GM12878 (cell line): ENCODE measurements at regions of chr7 and their contacts with region 1.

Region 1: GRCh38 chr7:81956520-81956919 is 186.7 kb upstream of the HGF start:
- DNase-seq: peak; percentile 30
- ATAC-seq: peak; percentile 98
- H3K4me3 ChIP-seq: no peak overlapping the region
- H3K27ac ChIP-seq: no peak overlapping the region
- H3K4me1 ChIP-seq: no peaks in the 10 kb centered on the region
- H3K27me3 ChIP-seq: no peaks in the 10 kb centered on the region
- CTCF ChIP-seq: peak; percentile 52 to 72 (median 66); a peak in 5 of 6 replicates
- EP300 ChIP-seq: no peak
- POLR2A ChIP-seq: no peak
- RAD21 ChIP-seq: peak; percentile 99

Region 2: DNA sequence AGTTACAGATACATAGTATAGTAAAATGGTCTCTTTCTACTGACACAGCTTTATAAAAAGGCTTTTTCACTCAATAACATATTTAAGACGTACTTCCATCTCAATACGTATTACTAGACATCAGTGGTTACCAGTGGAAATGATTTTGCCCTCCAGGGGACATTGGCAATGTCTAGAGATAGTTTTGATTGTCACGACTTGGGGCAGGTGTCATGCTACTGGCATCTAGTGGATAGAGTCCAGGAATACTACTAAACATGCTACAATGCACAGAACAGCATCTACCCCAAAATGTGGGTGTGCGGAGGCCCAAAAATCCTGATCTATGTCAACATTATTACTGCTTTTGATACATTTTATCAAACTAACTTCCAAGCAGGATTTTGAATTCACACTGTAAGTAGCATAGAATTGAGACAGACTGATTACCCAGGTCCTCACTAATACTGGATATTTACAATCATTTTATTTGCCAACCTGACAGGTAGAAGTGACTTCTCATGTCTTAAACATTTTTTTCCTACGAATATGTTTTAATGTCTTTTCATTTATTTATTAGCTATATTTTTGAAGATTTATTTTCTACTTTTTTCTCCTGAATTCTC is 240.4 kb before region 1 on chr7:
- CTCF ChIA-PET with region 1: interaction called, 3 read pairs
- POLR2A ChIA-PET with region 1: no interaction called
- RAD21 ChIA-PET with region 1: no interaction called
- SMC1A ChIA-PET with region 1: interaction called, 3 read pairs
- in situ Hi-C with region 1: no loop called
- intact Hi-C with region 1: loop called (anchors 1 kb)
- DNase-seq: no peak
- ATAC-seq: peak; percentile 80
- H3K4me3 ChIP-seq: no peak overlapping the region
- H3K27ac ChIP-seq: no peak overlapping the region
- H3K4me1 ChIP-seq: no peaks in the 10 kb centered on the region
- H3K27me3 ChIP-seq: no peaks in the 10 kb centered on the region
- CTCF ChIP-seq: peak; percentile 14 to 59 (median 26); a peak in 3 of 6 replicates
- EP300 ChIP-seq: no peak
- POLR2A ChIP-seq: no peak
- RAD21 ChIP-seq: peak; percentile 76

Region 3: GRCh38 chr7:81769891-81770727 is 186.4 kb before region 1 on chr7 and contains the start of gene HGF:
- CTCF ChIA-PET with region 1: no interaction called
- POLR2A ChIA-PET with region 1: no interaction called
- RAD21 ChIA-PET with region 1: interaction called, 5 read pairs
- SMC1A ChIA-PET with region 1: interaction called, 3 read pairs
- in situ Hi-C with region 1: no loop called
- intact Hi-C with region 1: loop called (anchors 5 kb)
- DNase-seq: no peak
- ATAC-seq: peak; percentile 67
- H3K4me3 ChIP-seq: peak within 1 kb of the TSS; percentile 43
- H3K27ac ChIP-seq: no peak within 1 kb of the TSS
- H3K4me1 ChIP-seq: no peaks in the 10 kb centered on the region; the same call in 1 of the 2 replicates
- H3K27me3 ChIP-seq: peaks cover 0 to 3% of the 10 kb centered on the region in 2 experiments; a peak in 1 of 4 replicates
- CTCF ChIP-seq: no peak
- EP300 ChIP-seq: no peak
- POLR2A ChIP-seq: no peak
- RAD21 ChIP-seq: no peak
- polyA plus RNA-seq, gene HGF: 1.4 to 1.7 TPM

Region 4: DNA sequence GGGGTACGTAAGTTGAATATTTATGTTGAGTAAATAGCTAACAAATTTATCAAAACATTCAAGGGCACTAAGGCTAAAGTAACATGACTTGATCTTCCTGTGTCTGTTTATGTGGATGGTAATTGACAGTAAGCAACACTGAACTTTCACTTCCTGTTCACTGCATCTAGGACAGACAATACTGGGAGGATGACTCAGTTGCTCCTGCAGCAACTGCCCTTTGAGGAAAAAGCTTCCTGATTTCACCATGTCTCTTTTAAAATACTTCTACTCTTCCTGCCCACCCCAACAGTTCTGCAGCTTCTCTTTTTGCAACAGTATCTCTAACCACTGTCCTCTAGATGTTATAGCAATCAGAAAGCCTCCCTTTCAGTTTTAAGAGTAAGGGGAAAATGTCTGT is 110.1 kb before region 1 on chr7:
- CTCF ChIA-PET with region 1: interaction called, 3 read pairs
- POLR2A ChIA-PET with region 1: no interaction called
- RAD21 ChIA-PET with region 1: no interaction called
- SMC1A ChIA-PET with region 1: no interaction called
- in situ Hi-C with region 1: no loop called
- intact Hi-C with region 1: loop called (anchors 2 kb)
- DNase-seq: peak; percentile 57
- ATAC-seq: peak; percentile 86
- H3K4me3 ChIP-seq: no peak overlapping the region; the same call in 1 of the 2 replicates
- H3K27ac ChIP-seq: peak overlapping the region; percentile 78
- H3K4me1 ChIP-seq: peaks cover 14% of the 10 kb centered on the region
- H3K27me3 ChIP-seq: no peaks in the 10 kb centered on the region; a peak in 1 of 4 replicates
- CTCF ChIP-seq: no peak
- EP300 ChIP-seq: peak in 1 of 2 experiments; percentile 57; a peak in 1 of 4 replicates
- POLR2A ChIP-seq: no peak
- RAD21 ChIP-seq: no peak

Region 5: GRCh38 chr7:81873559-81873958 is 83.0 kb before region 1 on chr7:
- CTCF ChIA-PET with region 1: interaction called, 3 read pairs
- POLR2A ChIA-PET with region 1: no interaction called
- RAD21 ChIA-PET with region 1: no interaction called
- SMC1A ChIA-PET with region 1: no interaction called
- in situ Hi-C with region 1: no loop called
- intact Hi-C with region 1: loop called (anchors 2 kb)
- DNase-seq: peak; percentile 31
- ATAC-seq: peak; percentile 75
- H3K4me3 ChIP-seq: no peak overlapping the region
- H3K27ac ChIP-seq: peak overlapping the region; percentile 84
- H3K4me1 ChIP-seq: peaks cover 9% of the 10 kb centered on the region
- H3K27me3 ChIP-seq: no peaks in the 10 kb centered on the region
- CTCF ChIP-seq: no peak
- EP300 ChIP-seq: peak; percentile 57 to 66; a peak in 2 of 4 replicates
- POLR2A ChIP-seq: no peak
- RAD21 ChIP-seq: no peak

Region 6: GRCh38 chr7:81887098-81888090 is 69.1 kb before region 1 on chr7:
- CTCF ChIA-PET with region 1: interaction called, 3 read pairs
- POLR2A ChIA-PET with region 1: no interaction called
- RAD21 ChIA-PET with region 1: no interaction called
- SMC1A ChIA-PET with region 1: interaction called, 3 read pairs
- in situ Hi-C with region 1: no loop called
- intact Hi-C with region 1: loop called (anchors 5 kb)
- DNase-seq: peak; percentile 37
- ATAC-seq: peak; percentile 53
- H3K4me3 ChIP-seq: peak overlapping the region; percentile 33; the same call in 1 of the 2 replicates
- H3K27ac ChIP-seq: no peak overlapping the region
- H3K4me1 ChIP-seq: peaks cover 18% of the 10 kb centered on the region
- H3K27me3 ChIP-seq: no peaks in the 10 kb centered on the region
- CTCF ChIP-seq: no peak
- EP300 ChIP-seq: peak in 1 of 2 experiments; percentile 34; a peak in 2 of 4 replicates
- POLR2A ChIP-seq: no peak
- RAD21 ChIP-seq: no peak

Region 7: DNA sequence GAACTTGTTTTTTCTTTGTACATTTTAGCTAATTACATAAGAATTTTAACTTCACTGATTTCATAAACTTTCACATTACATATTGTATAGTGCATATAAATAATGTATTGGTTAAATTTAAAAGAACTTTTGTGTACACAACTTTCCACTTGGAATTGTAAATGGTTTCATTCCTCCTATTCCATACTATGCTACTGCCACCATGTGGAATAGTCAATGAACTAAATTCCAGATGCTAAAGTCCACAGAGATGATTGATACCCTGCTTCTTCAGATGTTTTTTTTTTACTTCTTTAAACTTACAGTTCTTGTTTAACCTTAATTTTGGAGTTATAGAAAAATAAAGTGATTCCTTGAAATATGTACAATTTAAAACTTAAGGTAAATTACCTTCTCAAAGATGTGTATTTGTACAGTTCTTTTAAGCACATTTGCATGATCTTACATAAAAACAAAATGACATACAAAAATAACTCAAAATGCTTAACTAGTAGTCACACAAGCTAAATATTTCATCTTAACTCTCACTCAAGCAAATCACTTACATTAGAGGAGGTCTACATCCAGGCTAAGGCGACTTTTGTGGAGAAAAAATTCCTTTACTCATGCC is 60.9 kb after region 1 on chr7:
- CTCF ChIA-PET with region 1: no interaction called
- POLR2A ChIA-PET with region 1: no interaction called
- RAD21 ChIA-PET with region 1: no interaction called
- SMC1A ChIA-PET with region 1: interaction called, 3 read pairs
- in situ Hi-C with region 1: no loop called
- intact Hi-C with region 1: loop called (anchors 2 kb)
- DNase-seq: no peak
- ATAC-seq: 0 out of 3 replicates have a peak, but pooled peaks have one; percentile 28
- H3K4me3 ChIP-seq: no peak overlapping the region
- H3K27ac ChIP-seq: no peak overlapping the region
- H3K4me1 ChIP-seq: no peaks in the 10 kb centered on the region
- H3K27me3 ChIP-seq: no peaks in the 10 kb centered on the region; a peak in 1 of 4 replicates
- CTCF ChIP-seq: peak; percentile 14 to 52 (median 28); a peak in 2 of 6 replicates
- EP300 ChIP-seq: no peak
- POLR2A ChIP-seq: no peak
- RAD21 ChIP-seq: peak; percentile 71